ENCODE measurements at regions of chr9 and their contacts with region 1.

Region 1: DNA sequence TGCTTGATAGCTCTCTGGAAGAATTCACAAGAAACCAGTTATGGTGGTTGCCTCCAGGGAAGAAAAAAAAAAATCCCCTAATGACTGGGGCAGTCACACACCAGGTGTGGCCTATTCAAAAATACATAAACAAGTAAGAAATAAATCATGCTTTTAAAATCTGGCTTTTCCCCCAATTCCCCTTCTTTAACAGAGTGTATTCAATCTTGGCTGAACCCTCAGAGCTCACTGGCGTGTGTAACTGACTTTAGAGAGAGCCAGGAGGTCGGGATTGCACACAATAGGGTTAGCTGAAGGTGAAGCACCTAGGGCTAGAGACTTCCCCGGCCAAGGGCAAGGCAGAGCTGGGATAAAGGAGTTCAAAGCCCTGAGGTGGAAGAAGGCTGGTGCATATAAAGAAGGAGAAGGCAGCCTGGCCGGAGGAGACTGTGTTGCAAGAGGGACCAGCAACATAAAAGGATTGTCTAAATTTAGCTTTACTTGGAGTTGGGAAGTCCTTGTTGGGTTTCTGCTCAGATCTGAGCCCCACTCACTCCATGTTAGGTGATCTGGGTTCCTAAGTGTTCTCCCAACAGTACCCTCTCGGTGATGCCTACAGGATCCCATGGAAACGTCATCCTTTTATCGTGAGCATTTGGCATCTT is 19.7 kb downstream of the FNBP1 start:
- DNase-seq: peak; percentile 45
- H3K4me3 Mint-ChIP-seq: peak overlapping the region; percentile 7
- H3K27ac Mint-ChIP-seq: peak overlapping the region; percentile 79
- H3K4me1 Mint-ChIP-seq: peaks cover 92% of the 10 kb centered on the region
- H3K27me3 Mint-ChIP-seq: no peaks in the 10 kb centered on the region

Region 2: DNA sequence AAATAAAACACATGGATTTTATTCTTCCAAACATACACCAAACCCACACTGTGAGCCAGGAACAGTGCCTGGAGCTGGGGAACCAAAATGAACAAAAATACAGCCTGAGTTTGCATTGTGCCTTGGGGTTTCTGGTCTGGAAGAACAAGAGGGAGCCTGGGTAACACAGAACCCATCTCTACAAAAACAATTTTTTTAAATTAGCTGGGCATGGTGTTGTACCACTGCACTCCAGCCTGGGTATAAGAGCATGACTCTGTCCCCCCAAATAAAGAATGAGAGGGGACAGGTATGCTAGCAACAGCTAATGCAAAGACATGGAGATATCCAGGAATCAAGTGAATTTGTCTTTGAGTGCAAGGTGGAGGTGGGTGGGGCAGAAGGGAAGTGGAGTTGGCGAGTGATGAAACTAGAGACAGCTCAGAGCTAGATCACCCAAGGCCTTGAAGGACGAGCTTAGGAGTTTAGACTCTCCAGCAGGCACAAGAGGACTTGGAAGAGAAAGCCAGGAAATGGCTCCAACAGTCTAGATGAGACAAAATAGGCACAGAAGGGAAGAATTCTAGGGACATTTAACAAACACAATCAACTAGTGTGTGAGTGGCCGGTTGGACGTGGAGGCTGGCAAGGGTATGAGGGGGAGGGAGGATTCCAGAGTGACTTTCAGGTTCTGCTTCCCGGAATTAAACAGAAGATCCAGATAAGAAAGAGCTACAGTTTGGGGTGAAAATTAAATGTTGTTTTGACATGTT is 27.7 kb before region 1 on chr9:
- CTCF ChIA-PET with region 1: interaction called, 6 read pairs
- intact Hi-C with region 1: loop called (anchors 1 kb)
- DNase-seq: peak; percentile 63
- H3K4me3 Mint-ChIP-seq: peak overlapping the region; percentile 52
- H3K27ac Mint-ChIP-seq: peak overlapping the region; percentile 85
- H3K4me1 Mint-ChIP-seq: peaks cover 80% of the 10 kb centered on the region
- H3K27me3 Mint-ChIP-seq: no peaks in the 10 kb centered on the region

Region 3: DNA sequence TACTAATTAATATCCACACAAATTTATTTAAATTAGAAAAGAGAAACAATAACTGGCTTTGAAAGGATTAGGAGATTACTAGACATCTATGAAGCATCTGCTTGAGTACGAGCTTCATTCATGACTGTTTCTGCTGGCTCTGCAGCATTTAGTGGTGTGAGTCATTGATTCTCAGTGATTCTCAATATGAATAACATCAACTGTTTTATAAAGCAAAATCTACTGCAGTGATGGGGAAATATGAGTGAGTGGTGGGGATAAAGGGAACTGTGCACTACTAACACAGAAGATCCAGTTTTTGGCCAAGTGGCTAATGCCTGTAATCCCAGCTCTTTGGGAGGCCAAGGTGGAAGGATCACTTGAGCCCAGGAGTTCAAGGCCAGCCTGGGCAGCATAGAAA is 11.3 kb after region 1 on chr9:
- CTCF ChIA-PET with region 1: interaction called, 4 read pairs
- intact Hi-C with region 1: loop called (anchors 1 kb)
- DNase-seq: peak; percentile 61
- H3K4me3 Mint-ChIP-seq: peak overlapping the region; percentile 11
- H3K27ac Mint-ChIP-seq: peak overlapping the region; percentile 95
- H3K4me1 Mint-ChIP-seq: peaks cover 90% of the 10 kb centered on the region
- H3K27me3 Mint-ChIP-seq: no peaks in the 10 kb centered on the region